CD4-positive, alpha-beta memory T cell (primary cell): ENCODE measurements at regions of chr2 and their contacts with region 1.

Region 1: GRCh38 chr2:112259509-112260294 is 4.9 kb upstream of the ZC3H8 start:
- DNase-seq: peak; percentile 77 to 82 (median 81)
- H3K4me3 ChIP-seq: no peak overlapping the region
- H3K4me3 Mint-ChIP-seq: peak overlapping the region; percentile 49 to 78 (median 68)
- H3K27ac ChIP-seq: no peak overlapping the region
- H3K27ac Mint-ChIP-seq: peak overlapping the region; percentile 28 to 91 (median 83)
- H3K4me1 ChIP-seq: peaks cover 6% of the 10 kb centered on the region
- H3K4me1 Mint-ChIP-seq: peaks cover 5 to 13% (median 6%) of the 10 kb centered on the region in 4 donors
- H3K27me3 ChIP-seq: no peaks in the 10 kb centered on the region
- H3K27me3 Mint-ChIP-seq: no peaks in the 10 kb centered on the region

Region 2: DNA sequence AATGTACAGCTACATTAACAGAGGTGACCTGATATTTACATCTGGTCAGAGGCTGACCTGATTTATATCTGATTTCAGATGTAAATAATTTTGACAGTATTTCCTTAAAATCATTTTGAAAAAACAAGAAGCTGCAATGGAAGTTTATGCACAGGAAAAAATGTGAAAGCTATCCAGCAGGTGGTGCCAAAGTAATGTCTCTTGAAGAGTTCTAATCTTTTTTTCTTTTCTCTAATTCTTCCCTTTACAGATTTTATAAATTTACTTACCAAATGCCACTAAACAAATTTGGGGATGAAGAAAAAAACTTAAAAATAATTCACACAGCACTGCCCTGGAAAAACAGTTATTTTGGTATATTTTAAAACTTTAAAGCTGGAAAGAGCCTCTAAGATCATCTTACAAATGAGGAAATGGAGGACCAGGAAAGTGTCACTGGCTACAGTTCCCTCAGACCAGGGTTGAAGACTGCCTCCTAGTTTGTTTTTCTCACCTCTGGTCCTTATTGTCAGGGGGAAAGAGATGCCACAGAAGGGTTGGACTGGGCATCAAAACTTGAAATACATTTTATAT is 137.9 kb before region 1 on chr2:
- CTCF ChIA-PET with region 1: interaction called, 21 read pairs
- POLR2A ChIA-PET with region 1: interaction called, 4 read pairs
- intact Hi-C with region 1: loop called (anchors 1 kb)
- DNase-seq: peak; percentile 46 to 58 (median 52)
- H3K4me3 ChIP-seq: no peak overlapping the region
- H3K4me3 Mint-ChIP-seq: no peak overlapping the region
- H3K27ac ChIP-seq: no peak overlapping the region
- H3K27ac Mint-ChIP-seq: peak overlapping the region in 3 of 7 donors; percentile 16 to 68 (median 38)
- H3K4me1 ChIP-seq: no peaks in the 10 kb centered on the region
- H3K4me1 Mint-ChIP-seq: no peaks in the 10 kb centered on the region
- H3K27me3 ChIP-seq: no peaks in the 10 kb centered on the region
- H3K27me3 Mint-ChIP-seq: no peaks in the 10 kb centered on the region

Region 3: DNA sequence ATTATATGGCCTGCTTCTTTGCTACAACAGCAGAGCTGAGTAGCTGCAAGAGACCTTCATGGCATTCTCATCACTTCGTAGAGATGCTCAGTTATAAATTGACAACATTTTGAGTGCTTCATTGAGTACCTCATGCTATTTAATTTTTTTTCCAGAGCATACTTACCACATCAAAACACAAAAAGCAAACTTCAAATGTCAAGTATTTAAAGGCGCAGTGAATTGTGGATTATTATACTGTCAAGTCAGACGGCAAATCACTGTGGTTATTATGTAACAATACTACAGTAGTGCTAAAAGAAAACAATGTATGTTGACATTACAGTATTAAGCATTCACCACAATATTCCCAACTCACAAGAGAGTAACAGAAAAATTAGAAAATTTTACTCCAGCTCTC is 17.3 kb before region 1 on chr2:
- CTCF ChIA-PET with region 1: interaction called, 16 read pairs
- POLR2A ChIA-PET with region 1: interaction called, 10 read pairs
- intact Hi-C with region 1: no loop called
- DNase-seq: no peak
- H3K4me3 ChIP-seq: no peak overlapping the region
- H3K4me3 Mint-ChIP-seq: peak overlapping the region in 2 of 8 donors; percentile 24 to 43
- H3K27ac ChIP-seq: no peak overlapping the region
- H3K27ac Mint-ChIP-seq: peak overlapping the region in 4 of 7 donors; percentile 25 to 59 (median 36)
- H3K4me1 ChIP-seq: peaks cover 11% of the 10 kb centered on the region
- H3K4me1 Mint-ChIP-seq: peaks cover 19 to 32% (median 20%) of the 10 kb centered on the region in 4 donors
- H3K27me3 ChIP-seq: no peaks in the 10 kb centered on the region
- H3K27me3 Mint-ChIP-seq: no peaks in the 10 kb centered on the region

Region 4: GRCh38 chr2:112275306-112275886 is 15.7 kb after region 1 on chr2 and contains the start of gene ZC3H6:
- CTCF ChIA-PET with region 1: interaction called, 14 read pairs
- POLR2A ChIA-PET with region 1: interaction called, 27 read pairs
- intact Hi-C with region 1: loop called (anchors 1 kb)
- DNase-seq: peak; percentile 97 to 100 (median 99)
- H3K4me3 ChIP-seq: peak within 1 kb of the TSS; percentile 90 to 97
- H3K4me3 Mint-ChIP-seq: peak within 1 kb of the TSS; percentile 91 to 97 (median 94)
- H3K27ac ChIP-seq: peak within 1 kb of the TSS; percentile 100
- H3K27ac Mint-ChIP-seq: peak within 1 kb of the TSS; percentile 97 to 100 (median 99)
- H3K4me1 ChIP-seq: peaks cover 28% of the 10 kb centered on the region
- H3K4me1 Mint-ChIP-seq: peaks cover 11 to 46% (median 19%) of the 10 kb centered on the region in 4 donors
- H3K27me3 ChIP-seq: no peaks in the 10 kb centered on the region
- H3K27me3 Mint-ChIP-seq: no peaks in the 10 kb centered on the region
- total RNA-seq, gene ZC3H6: 36.8 to 43.2 TPM

Region 5: GRCh38 chr2:112433932-112434730 is 174.4 kb after region 1 on chr2:
- CTCF ChIA-PET with region 1: interaction called, 3 read pairs
- POLR2A ChIA-PET with region 1: interaction called, 3 read pairs
- intact Hi-C with region 1: loop called (anchors 2 kb)
- DNase-seq: peak in 1 of 5 donors; percentile 9
- H3K4me3 ChIP-seq: no peak overlapping the region
- H3K4me3 Mint-ChIP-seq: peak overlapping the region in 1 of 8 donors; percentile 16
- H3K27ac ChIP-seq: no peak overlapping the region
- H3K27ac Mint-ChIP-seq: peak overlapping the region in 2 of 7 donors; percentile 27 to 35
- H3K4me1 ChIP-seq: peaks cover 9% of the 10 kb centered on the region
- H3K4me1 Mint-ChIP-seq: peaks cover 6 to 29% (median 15%) of the 10 kb centered on the region in 4 donors
- H3K27me3 ChIP-seq: no peaks in the 10 kb centered on the region
- H3K27me3 Mint-ChIP-seq: peaks cover 5 to 9% of the 10 kb centered on the region in 2 donors

Region 6: GRCh38 chr2:112764071-112765044 is 504.7 kb after region 1 on chr2 and contains the start of gene CKAP2L:
- CTCF ChIA-PET with region 1: no interaction called
- POLR2A ChIA-PET with region 1: no interaction called
- intact Hi-C with region 1: no loop called
- DNase-seq: peak; percentile 94 to 98 (median 96)
- H3K4me3 ChIP-seq: peak within 1 kb of the TSS; percentile 39 to 85
- H3K4me3 Mint-ChIP-seq: peak within 1 kb of the TSS; percentile 91 to 98 (median 95)
- H3K27ac ChIP-seq: peak within 1 kb of the TSS; percentile 60
- H3K27ac Mint-ChIP-seq: peak within 1 kb of the TSS; percentile 76 to 96 (median 92)
- H3K4me1 ChIP-seq: peaks cover 29% of the 10 kb centered on the region
- H3K4me1 Mint-ChIP-seq: peaks cover 21 to 49% (median 35%) of the 10 kb centered on the region in 4 donors
- H3K27me3 ChIP-seq: no peaks in the 10 kb centered on the region
- H3K27me3 Mint-ChIP-seq: no peaks in the 10 kb centered on the region
- total RNA-seq, gene CKAP2L: 0.06 TPM in 1 of 2 experiments, not detected in the other